ENCODE measurements at regions of chr2 and their contacts with region 1.

Region 1: DNA sequence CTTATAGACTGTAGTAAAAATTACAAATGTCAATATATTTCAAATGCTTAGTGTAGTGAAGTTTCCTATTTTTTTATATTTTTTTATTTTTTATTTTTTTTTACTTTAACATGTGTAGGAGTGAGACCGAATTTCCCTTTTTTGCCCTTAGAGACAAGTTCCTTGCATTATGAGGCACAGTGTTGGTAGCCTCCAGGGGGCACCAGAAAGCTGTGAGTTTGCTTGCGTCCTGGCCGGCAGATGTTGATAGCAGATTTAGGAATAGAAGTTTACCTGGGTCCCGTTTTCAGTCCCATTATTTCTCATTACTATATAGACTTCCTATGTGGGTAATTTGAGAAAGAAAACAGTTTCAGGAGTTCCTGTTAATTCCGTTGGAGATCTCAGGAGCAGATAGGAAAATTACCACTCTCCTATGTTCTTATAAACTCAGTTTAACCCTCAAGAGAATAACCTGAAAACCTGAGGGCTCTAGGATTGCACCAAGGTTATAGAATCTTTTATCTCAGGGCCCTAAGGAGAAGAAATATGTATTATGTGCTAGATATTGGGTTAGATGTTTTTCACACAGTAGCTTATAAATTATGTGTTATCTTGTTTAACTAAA is 157.5 kb upstream of the SESTD1 start:
- DNase-seq: peak; percentile 23
- CTCF ChIP-seq: peak; percentile 78

Region 2: DNA sequence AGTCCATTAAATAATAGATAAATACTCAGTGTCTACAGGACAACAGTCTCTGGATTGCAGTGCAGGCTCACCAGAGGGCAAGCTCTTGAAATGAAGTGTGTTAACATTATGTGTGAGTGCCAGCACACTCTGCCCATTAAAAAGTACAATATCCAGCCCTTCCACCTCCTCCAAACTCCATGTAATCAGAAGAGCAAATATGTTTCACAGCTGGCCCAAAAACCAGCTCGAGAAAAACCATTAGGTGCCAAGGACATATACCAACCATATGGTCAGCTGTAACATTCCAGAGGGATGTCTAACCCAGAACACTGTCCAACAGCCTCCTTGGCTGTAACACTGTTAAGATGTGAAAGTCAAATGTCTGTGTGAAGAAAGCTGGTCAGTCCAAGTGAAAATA is 327.1 kb after region 1 on chr2:
- in situ Hi-C with region 1: loop called (anchors 25 kb)
- DNase-seq: no peak
- CTCF ChIP-seq: no peak